IMR-90 (cell line): ENCODE measurements at regions of chr15 and their contacts with region 1.

Region 1: DNA sequence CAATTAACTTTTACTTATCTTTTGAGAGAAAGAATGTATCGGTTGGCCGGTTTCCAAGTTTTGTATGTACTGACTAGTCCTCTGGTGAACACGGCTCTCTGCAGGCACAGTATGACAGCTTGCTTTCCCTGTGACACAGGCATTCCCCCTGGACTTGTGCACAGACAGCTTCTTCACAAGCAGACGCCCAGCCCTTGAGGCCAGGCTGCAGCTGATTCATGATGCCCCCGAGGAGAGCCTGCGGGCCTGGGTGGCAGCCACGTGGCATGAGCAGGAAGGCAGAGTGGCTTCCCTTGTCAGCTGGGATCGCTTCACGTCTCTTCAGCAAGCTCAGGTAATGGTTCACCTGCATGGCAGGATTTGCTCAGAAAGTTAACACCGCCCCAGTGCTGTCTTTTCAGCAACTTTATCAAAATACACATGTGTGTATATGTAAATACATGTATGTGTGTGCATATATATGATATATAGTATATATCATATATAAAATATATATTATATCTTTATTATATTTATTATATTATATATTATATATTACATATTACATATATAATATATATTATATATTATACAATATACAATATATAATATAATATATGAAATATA is 25.5 kb downstream of the FAN1 start:
- DNase-seq: no peak
- ATAC-seq: no peak
- H3K4me3 ChIP-seq: no peak overlapping the region
- H3K27ac ChIP-seq: no peak overlapping the region
- H3K4me1 ChIP-seq: peaks cover 16% of the 10 kb centered on the region
- H3K27me3 ChIP-seq: no peaks in the 10 kb centered on the region; the same call in 1 of the 2 replicates
- CTCF ChIP-seq: no peak
- POLR2A ChIP-seq: no peak
- RAD21 ChIP-seq: no peak

Region 2: DNA sequence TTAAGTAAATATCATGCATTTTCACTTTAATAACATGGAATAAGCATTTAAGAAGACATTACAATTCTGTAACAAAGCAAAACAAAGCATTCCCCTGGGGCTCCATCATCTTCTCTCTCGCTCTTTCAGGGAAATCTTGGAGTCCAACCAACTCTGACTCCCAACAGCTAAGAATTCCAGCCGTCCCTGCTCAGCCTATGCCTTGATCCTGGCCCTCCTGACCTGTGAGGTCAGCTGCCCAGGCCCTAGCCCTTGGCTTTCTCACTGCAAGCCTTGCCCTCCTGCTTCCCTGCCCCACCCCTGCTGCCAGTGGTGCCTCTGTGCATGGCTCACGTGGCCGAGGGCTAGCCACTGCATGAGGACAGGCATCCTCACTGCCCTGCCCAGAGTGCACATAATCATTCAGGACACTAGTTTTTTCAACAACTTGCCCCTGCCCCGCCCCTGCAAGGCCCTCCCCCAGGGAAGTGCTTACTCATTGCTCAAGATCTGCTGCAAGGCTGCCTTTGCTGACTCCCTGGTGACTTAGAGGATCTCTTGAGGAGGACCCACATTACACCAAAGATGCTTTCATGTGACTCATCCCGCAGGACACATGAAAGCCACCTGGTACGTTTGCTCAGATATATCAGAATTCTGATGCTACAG is 24.7 kb after region 1 on chr15:
- CTCF ChIA-PET with region 1: no interaction called
- POLR2A ChIA-PET with region 1: no interaction called
- dilution Hi-C with region 1: no loop called
- in situ Hi-C with region 1: no loop called
- intact Hi-C with region 1: no loop called
- DNase-seq: peak; percentile 96
- ATAC-seq: peak; percentile 95
- H3K4me3 ChIP-seq: no peak overlapping the region
- H3K27ac ChIP-seq: peak overlapping the region; percentile 86
- H3K4me1 ChIP-seq: peaks cover 9% of the 10 kb centered on the region
- H3K27me3 ChIP-seq: no peaks in the 10 kb centered on the region
- CTCF ChIP-seq: no peak
- POLR2A ChIP-seq: no peak
- RAD21 ChIP-seq: peak; percentile 27

Region 3: DNA sequence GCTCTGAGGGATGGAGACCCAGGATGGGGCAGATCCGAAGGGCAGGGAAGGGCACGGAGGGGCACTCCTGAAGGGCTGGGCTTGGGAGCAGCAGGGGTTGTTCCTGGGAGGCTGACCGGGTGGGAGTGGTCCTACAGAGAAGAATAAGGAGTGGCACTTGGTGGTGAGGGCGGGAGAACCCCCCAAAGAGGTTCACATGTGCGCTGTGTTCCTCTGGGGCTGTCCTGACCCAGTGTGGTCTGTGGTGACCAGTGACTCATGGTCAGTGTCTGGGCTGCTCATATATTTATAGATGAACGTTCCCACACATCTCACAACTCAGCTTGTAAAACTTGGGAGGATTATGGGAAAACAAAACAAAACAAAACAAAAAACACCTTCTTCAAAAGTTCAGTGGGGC is 162.3 kb after region 1 on chr15:
- CTCF ChIA-PET with region 1: no interaction called
- POLR2A ChIA-PET with region 1: interaction called, 13 read pairs
- dilution Hi-C with region 1: no loop called
- in situ Hi-C with region 1: no loop called
- intact Hi-C with region 1: no loop called
- DNase-seq: peak; percentile 70
- ATAC-seq: peak; percentile 60; the same call in 1 of the 2 replicates
- H3K4me3 ChIP-seq: no peak overlapping the region
- H3K27ac ChIP-seq: no peak overlapping the region
- H3K4me1 ChIP-seq: peaks cover 9% of the 10 kb centered on the region
- H3K27me3 ChIP-seq: peaks cover 3% of the 10 kb centered on the region
- CTCF ChIP-seq: no peak
- POLR2A ChIP-seq: no peak
- RAD21 ChIP-seq: no peak

Region 4: DNA sequence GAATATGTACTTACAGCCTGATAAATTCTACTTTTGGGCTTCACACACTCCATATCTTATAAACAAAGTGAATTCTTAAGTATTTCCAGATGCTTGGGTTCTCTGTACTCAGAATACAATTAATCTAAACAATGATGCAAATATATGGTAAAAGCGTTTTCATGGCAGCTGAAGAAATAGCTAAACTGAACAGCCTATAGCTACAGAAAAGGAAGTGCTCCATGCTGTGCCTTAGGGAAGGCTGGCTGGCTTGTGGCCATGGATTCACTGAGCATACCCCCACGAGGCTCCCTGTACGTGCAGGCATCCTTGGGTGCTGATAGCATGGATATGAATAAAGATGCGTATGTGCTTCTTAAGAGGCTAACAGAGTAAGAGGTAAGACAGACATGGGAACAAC is 661.4 kb after region 1 on chr15:
- CTCF ChIA-PET with region 1: no interaction called
- POLR2A ChIA-PET with region 1: no interaction called
- dilution Hi-C with region 1: no loop called
- in situ Hi-C with region 1: no loop called
- intact Hi-C with region 1: no loop called
- DNase-seq: peak; percentile 78
- ATAC-seq: peak; percentile 68
- H3K4me3 ChIP-seq: no peak overlapping the region
- H3K27ac ChIP-seq: peak overlapping the region; percentile 26; the same call in 1 of the 2 replicates
- H3K4me1 ChIP-seq: peaks cover 5% of the 10 kb centered on the region; the same call in 1 of the 2 replicates
- H3K27me3 ChIP-seq: no peaks in the 10 kb centered on the region
- CTCF ChIP-seq: no peak
- POLR2A ChIP-seq: no peak
- RAD21 ChIP-seq: no peak